ENCODE measurements at regions of chr4 and their contacts with region 1.

Region 1: GRCh38 chr4:1351854-1352633 is 5.0 kb downstream of the UVSSA start:
- DNase-seq: peak; percentile 85 to 94 (median 93)
- ATAC-seq: peak; percentile 15 to 20
- H3K4me3 ChIP-seq: no peak overlapping the region
- H3K27ac ChIP-seq: no peak overlapping the region
- H3K4me1 ChIP-seq: no peaks in the 10 kb centered on the region
- H3K27me3 ChIP-seq: no peaks in the 10 kb centered on the region

Region 2: DNA sequence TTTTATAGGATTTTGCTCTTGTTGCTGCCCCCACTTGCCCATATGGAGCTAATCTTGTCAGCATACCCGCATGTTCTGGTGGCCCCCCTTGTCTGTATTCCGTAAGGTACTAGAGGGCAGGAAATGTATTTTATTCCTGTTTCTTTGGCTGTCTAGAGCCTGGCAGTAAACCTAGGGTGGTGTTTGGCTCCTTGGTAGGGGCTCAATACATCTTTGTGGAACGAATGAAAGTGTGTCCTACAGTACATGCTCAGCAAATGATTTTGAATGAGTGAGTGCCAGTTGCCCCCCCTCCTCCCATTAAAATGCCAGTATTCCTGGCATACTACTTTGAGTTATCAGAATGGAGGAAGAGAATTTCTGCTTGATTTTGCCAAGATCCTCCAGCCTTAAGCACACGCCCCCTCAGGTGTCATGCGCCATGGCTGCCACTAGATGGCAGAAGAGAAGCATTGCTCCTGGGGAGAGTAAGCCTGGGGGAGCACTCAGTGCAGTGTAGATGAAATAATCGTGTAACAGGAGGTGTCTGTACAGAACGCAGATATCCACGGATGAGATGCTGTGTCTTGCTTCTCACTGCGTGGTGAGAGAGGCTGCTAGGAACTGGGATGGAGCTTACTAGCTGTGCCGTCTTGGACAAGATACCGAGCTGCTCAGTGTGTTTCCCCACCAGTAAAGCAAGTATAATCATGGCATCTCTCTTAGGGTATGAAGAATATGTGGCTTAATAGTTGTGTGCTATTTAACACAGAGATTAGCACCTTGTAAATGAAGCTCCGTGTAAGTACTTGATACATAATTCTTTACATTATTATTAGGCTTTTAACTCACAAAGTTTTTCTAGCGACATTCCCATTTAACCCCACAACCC is 221.5 kb before region 1 on chr4:
- intact Hi-C with region 1: loop called in 3 of 4 experiments (anchors 2 to 10 kb)
- DNase-seq: peak; percentile 62 to 85 (median 82)
- ATAC-seq: peak; percentile 93 to 96
- H3K4me3 ChIP-seq: no peak overlapping the region
- H3K27ac ChIP-seq: no peak overlapping the region
- H3K4me1 ChIP-seq: no peaks in the 10 kb centered on the region
- H3K27me3 ChIP-seq: no peaks in the 10 kb centered on the region

Region 3: DNA sequence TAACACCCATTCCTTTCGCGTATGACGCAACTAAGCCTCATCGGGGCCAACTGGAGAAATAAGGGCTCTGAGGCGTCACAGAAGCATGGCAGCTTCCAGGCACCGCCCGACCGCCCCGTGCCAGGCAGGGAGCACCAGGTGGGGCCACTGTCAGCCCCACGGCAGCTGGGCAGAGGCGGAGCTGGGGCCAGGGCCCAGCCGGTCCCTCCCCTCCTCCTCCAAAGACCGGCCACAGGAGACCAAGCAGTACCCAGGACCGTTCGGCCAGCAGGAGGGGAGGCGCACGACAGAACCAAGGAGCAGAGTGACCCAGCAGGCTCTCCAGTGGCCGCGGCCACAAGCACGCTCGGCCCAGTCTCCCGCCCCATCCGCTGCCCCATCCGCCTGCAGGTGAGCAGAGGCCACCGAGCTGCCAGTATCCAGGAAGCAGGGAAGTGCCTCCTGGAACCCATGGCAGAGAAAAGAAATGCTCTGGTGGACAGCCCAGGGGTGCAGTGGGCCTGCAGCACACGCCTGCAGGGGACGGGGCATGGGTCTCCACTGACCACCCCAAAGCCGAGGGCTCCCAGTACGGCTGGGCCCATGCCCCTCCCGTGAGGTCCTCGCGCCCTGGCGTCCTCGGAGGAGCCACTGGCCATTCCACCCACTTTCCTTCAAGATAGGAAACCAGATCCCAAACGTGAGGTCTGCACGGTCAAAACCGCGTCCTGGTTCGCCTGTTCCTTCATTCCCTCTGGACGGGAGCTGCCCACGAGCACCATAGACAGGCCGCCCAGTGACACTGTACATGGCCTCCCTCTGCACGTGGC is 112.7 kb before region 1 on chr4:
- intact Hi-C with region 1: no loop called
- DNase-seq: peak in 2 of 3 donors; percentile 50 to 53
- ATAC-seq: no peak
- H3K4me3 ChIP-seq: no peak overlapping the region
- H3K27ac ChIP-seq: no peak overlapping the region
- H3K4me1 ChIP-seq: peaks cover 10% of the 10 kb centered on the region
- H3K27me3 ChIP-seq: no peaks in the 10 kb centered on the region

Region 4: DNA sequence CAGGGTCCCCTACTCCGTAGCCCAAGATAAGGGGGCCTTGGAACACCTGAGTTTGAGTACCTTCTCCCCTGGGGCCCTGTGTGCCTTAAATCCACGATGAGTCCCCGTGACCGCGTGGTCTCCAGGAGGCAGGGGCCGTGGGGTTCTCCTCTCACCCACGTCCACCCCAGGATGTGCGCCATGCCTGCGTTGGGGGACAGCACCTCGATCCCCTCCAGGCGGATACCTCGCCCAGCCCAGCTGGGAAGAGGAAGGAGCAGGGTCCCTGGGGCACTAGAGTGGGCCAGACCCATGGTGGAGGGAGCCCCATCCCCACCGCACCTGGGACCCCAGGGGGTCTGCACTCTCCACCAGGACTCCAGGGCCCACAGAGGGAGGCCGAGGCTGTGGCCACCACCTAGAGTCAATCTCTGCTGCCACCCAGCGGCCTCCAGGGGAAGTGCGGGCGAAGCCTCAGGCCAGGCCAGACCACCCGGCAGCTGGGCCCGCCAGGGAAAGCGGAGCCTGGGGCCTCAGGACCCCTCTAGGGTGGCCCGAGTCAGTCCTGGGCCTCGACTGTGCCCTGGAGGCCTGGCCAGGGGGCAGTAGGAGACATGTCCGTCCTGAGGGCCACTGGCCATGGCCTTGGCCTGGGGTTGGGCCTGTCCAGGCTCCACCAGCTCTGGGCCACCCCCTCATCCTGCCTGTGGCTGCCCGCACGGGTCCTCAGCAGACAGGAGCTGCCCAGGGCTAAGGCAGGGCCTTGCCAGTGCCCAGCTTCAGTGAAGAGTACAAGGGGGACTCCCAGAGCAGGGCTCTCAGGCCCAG is 277.1 kb after region 1 on chr4:
- intact Hi-C with region 1: loop called (anchors 2 to 5 kb)
- DNase-seq: peak; percentile 59 to 87 (median 87)
- ATAC-seq: peak; percentile 66 to 81
- H3K4me3 ChIP-seq: no peak overlapping the region
- H3K27ac ChIP-seq: no peak overlapping the region
- H3K4me1 ChIP-seq: no peaks in the 10 kb centered on the region
- H3K27me3 ChIP-seq: no peaks in the 10 kb centered on the region

Region 5: DNA sequence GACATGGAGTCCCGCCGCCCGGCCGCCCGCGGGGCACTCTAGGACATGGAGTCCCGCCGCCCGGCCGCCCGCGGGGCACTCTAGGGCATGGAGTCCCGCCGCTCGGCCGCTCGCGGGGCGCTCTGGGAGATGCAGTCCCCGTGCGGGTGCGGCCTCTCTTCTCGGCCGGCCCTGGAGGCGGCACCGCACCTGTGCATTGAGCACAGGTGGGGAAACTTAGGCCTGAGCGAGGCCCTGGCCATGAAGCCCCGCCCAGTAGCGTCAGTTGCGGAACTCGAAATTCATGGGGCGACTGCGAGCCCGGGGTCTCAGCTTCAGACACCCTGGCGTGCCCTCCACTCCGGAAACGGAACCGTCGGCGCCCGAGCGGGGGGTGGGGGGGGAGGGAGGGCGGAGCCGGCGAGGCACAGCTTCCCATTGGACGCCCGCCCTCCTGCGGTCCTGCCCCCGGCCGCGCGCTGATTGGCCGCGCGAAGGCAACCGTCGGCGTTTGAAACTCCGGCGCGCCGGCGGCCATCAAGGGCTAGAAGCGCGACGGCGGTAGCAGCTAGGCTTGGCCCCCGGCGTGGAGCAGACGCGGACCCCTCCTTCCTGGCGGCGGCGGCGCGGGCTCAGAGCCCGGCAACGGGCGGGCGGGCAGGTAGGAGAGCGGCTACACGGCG is 369.1 kb after region 1 on chr4 and contains the starts of genes TACC3 and TMEM129:
- intact Hi-C with region 1: loop called in 1 of 4 experiments (anchors 10 kb)
- DNase-seq: peak; percentile 93 to 96 (median 96)
- ATAC-seq: peak; percentile 91 to 92
- H3K4me3 ChIP-seq: peak within 1 kb of the TSS; percentile 63
- H3K27ac ChIP-seq: peak within 1 kb of the TSS; percentile 90
- H3K4me1 ChIP-seq: no peaks in the 10 kb centered on the region
- H3K27me3 ChIP-seq: no peaks in the 10 kb centered on the region
- total RNA-seq, gene TACC3: 4.1 to 10.8 (median 6.5) TPM
- total RNA-seq, gene TMEM129: 43.0 to 59.2 (median 48.0) TPM

Region 6: GRCh38 chr4:2071912-2072867 is 720.1 kb after region 1 on chr4:
- intact Hi-C with region 1: no loop called
- DNase-seq: no peak
- ATAC-seq: no peak
- H3K4me3 ChIP-seq: no peak overlapping the region
- H3K27ac ChIP-seq: no peak overlapping the region
- H3K4me1 ChIP-seq: no peaks in the 10 kb centered on the region
- H3K27me3 ChIP-seq: no peaks in the 10 kb centered on the region

Measured in right cardiac atrium (tissue), 5 donors.